ENCODE measurements at regions of chr10 and their contacts with region 1.

Region 1: DNA sequence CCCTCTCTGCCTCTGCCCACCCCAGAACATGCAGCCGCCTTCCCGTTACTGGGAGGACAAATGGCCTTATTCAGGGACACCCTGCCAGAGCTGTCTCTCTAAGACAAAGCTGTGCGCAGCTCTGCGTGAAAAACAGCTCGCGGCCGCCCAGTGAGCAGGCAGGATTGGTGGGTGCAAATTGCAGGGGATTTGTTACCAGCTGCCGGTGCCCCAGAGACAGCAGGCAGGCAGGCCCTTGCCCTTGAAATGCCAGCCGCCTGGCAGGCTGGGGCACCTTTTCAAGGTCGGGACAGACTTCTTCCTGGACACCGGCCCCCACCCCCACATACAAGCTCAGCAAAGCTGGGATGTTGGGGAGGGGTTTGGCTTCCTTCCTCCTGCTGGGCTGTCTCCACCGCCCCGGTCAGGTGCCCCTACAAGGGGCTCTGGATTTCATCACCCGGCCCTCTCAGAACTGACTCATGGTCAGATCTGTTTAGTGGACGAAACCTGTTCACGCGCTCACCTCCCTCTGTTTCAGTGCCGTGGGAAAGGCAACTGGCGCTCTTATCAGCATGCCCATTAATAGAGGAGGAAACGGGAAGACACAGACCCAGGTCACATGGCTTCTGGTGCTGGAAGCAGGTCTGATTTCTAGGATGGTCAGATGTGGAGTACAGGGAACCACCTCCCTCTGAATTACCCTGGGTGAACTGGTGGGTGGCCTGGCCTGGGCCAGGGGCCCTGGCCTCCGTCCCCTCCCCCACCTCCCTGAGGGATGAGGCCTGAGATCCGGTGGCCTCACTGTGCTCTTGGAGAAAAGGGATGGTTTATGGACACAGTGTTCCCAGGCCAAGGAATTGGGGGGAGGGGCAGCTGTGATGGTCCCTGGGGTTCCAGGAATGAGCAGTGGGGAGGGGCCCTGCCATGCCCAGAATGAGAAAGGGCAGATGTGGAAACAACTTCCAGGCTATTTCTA is 123.9 kb upstream of the PPIF start:
- DNase-seq: peak; percentile 96
- H3K4me3 ChIP-seq: peak overlapping the region in 1 of 4 donors; percentile 10
- H3K27ac ChIP-seq: peak overlapping the region; percentile 81 to 96 (median 90)
- H3K4me1 ChIP-seq: peaks cover 0 to 100% (median 100%) of the 10 kb centered on the region in 4 donors
- H3K27me3 ChIP-seq: no peaks in the 10 kb centered on the region
- CTCF ChIP-seq: no peak
- EP300 ChIP-seq: peak; percentile 83 to 98 (median 92)
- POLR2A ChIP-seq: no peak

Region 2: GRCh38 chr10:79239275-79239779 is 16.0 kb after region 1 on chr10:
- intact Hi-C with region 1: loop called (anchors 2 kb)
- DNase-seq: peak; percentile 89
- H3K4me3 ChIP-seq: no peak overlapping the region
- H3K27ac ChIP-seq: peak overlapping the region; percentile 20 to 98 (median 94)
- H3K4me1 ChIP-seq: peaks cover 0 to 93% (median 88%) of the 10 kb centered on the region in 4 donors
- H3K27me3 ChIP-seq: no peaks in the 10 kb centered on the region
- CTCF ChIP-seq: no peak
- EP300 ChIP-seq: peak in 1 of 4 donors; percentile 63
- POLR2A ChIP-seq: no peak

Region 3: GRCh38 chr10:79274279-79275104 is 51.1 kb after region 1 on chr10:
- intact Hi-C with region 1: loop called (anchors 1 kb)
- DNase-seq: peak; percentile 98
- H3K4me3 ChIP-seq: no peak overlapping the region
- H3K27ac ChIP-seq: peak overlapping the region; percentile 71 to 96 (median 90)
- H3K4me1 ChIP-seq: peaks cover 0 to 86% (median 71%) of the 10 kb centered on the region in 4 donors
- H3K27me3 ChIP-seq: no peaks in the 10 kb centered on the region
- CTCF ChIP-seq: peak in 3 of 4 experiments; percentile 27 to 44 (median 38)
- EP300 ChIP-seq: peak; percentile 77 to 97 (median 90)
- POLR2A ChIP-seq: no peak

Region 4: DNA sequence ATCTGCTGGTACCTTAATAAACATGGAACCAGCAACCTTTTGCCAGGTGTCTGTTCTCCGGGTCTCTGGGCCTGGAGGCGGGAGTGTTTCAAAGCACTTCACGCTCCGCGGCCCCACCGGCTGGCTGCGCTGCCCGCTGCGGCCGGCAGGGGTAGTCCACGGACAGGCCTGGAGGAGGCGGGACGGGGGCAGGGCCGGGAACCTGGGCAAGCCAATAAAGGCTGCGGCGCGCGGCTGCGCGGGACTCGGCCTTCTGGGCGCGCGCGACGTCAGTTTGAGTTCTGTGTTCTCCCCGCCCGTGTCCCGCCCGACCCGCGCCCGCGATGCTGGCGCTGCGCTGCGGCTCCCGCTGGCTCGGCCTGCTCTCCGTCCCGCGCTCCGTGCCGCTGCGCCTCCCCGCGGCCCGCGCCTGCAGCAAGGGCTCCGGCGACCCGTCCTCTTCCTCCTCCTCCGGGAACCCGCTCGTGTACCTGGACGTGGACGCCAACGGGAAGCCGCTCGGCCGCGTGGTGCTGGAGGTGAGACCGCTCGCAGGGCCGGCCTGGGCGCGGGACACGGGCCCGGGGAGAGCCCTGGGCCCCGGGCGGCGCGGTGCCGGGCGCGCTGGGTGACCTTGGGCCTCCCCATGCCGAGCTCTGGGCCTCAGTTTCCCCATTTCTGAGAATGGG is 124.0 kb after region 1 on chr10 and contains the start of gene PPIF:
- intact Hi-C with region 1: no loop called
- DNase-seq: peak; percentile 98
- H3K4me3 ChIP-seq: peak within 1 kb of the TSS; percentile 54 to 73 (median 68)
- H3K27ac ChIP-seq: peak within 1 kb of the TSS; percentile 85 to 89 (median 88)
- H3K4me1 ChIP-seq: peaks cover 0 to 31% (median 28%) of the 10 kb centered on the region in 4 donors
- H3K27me3 ChIP-seq: no peaks in the 10 kb centered on the region
- CTCF ChIP-seq: peak; percentile 94 to 99 (median 96)
- EP300 ChIP-seq: no peak
- POLR2A ChIP-seq: no peak
- total RNA-seq, gene PPIF: 26.4 to 48.5 (median 32.5) TPM

Measured in sigmoid colon (tissue), 7 donors.